ENCODE measurements at regions of chr16 and their contacts with region 1.

Region 1: DNA sequence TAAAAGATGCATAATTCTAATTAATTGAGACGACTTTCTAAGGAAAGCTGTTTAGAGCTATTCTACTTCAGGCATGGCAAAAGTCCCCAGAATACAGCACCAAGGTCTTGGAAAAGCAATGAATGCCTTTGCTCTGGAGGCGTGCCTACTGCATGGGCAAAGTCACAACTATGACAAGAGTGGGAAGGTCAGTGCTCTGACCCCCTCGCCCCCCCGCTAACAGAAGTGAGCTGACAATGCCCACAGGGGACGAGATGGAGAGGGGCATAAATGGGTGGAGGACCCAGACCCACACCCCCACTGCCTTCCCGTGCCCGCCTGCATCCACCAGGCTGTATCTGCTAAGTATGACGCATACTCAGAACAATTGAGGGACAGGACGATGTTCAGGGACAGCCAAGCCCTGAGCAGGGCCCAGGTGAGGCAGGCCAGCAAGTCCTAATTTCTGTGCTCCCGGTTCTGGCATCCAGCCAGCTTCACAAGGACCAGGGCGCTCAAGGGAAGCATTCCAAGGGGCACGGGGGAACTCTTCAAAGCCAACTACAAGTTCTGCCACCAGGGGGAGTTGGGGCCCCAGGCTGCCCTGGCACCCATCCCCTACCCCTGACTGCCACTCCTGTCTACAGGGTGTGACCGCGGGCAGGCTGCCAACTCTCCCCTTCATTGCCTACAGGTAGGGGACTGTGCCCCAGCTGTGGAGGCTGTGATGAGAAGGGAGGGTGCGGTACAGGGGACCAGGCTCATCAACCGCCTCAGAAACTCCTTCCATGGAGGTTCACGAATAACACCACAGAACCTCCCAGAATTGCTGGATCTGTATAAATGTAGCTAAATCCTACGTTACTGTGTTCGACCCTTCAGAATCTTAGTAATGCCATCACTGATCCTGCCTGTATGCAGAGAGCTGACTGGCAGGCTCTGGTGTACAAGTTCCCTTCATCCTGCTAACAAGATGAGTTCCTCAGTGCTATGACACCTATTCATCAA is 20.8 kb downstream of the NPRL3 start:
- DNase-seq: peak; percentile 58 to 94
- H3K4me3 ChIP-seq: no peak overlapping the region
- H3K27ac ChIP-seq: no peak overlapping the region
- H3K4me1 ChIP-seq: peaks cover 0 to 4% (median 1%) of the 10 kb centered on the region in 4 experiments; a peak in 4 of 7 replicates
- H3K27me3 ChIP-seq: no peaks in the 10 kb centered on the region
- CTCF ChIP-seq: peak; percentile 89 to 90 (median 89)
- EP300 ChIP-seq: no peak
- POLR2A ChIP-seq: no peak
- RAD21 ChIP-seq: peak; percentile 80 to 82

Region 2: GRCh38 chr16:65671-66137 is 52.0 kb before region 1 on chr16:
- CTCF ChIA-PET with region 1: interaction called, 18 read pairs
- POLR2A ChIA-PET with region 1: interaction called, 5 read pairs
- DNase-seq: peak in 1 of 2 experiments; percentile 98
- H3K4me3 ChIP-seq: no peak overlapping the region
- H3K27ac ChIP-seq: no peak overlapping the region
- H3K4me1 ChIP-seq: peaks cover 0 to 14% (median 4%) of the 10 kb centered on the region in 4 experiments; a peak in 6 of 7 replicates
- H3K27me3 ChIP-seq: no peaks in the 10 kb centered on the region
- CTCF ChIP-seq: peak; percentile 98 to 100 (median 99)
- EP300 ChIP-seq: no peak
- POLR2A ChIP-seq: no peak
- RAD21 ChIP-seq: peak; percentile 99 to 100

Region 3: GRCh38 chr16:96935-97381 is 20.7 kb before region 1 on chr16:
- CTCF ChIA-PET with region 1: interaction called, 43 read pairs
- POLR2A ChIA-PET with region 1: interaction called, 6 read pairs
- DNase-seq: peak; percentile 84 to 97
- H3K4me3 ChIP-seq: no peak overlapping the region
- H3K27ac ChIP-seq: no peak overlapping the region
- H3K4me1 ChIP-seq: no peaks in the 10 kb centered on the region
- H3K27me3 ChIP-seq: no peaks in the 10 kb centered on the region; a peak in 1 of 7 replicates
- CTCF ChIP-seq: peak; percentile 100
- EP300 ChIP-seq: no peak
- POLR2A ChIP-seq: no peak
- RAD21 ChIP-seq: peak; percentile 90 to 92

Region 4: GRCh38 chr16:149024-149662 is 31.5 kb after region 1 on chr16:
- CTCF ChIA-PET with region 1: interaction called, 18 read pairs
- POLR2A ChIA-PET with region 1: no interaction called
- DNase-seq: no peak
- H3K4me3 ChIP-seq: no peak overlapping the region
- H3K27ac ChIP-seq: no peak overlapping the region
- H3K4me1 ChIP-seq: no peaks in the 10 kb centered on the region
- H3K27me3 ChIP-seq: peaks cover 0 to 11% (median 7%) of the 10 kb centered on the region in 4 experiments; a peak in 6 of 7 replicates
- CTCF ChIP-seq: no peak
- EP300 ChIP-seq: no peak
- POLR2A ChIP-seq: no peak
- RAD21 ChIP-seq: no peak

Region 5: GRCh38 chr16:180938-181667 is 63.4 kb after region 1 on chr16:
- CTCF ChIA-PET with region 1: interaction called, 29 read pairs
- POLR2A ChIA-PET with region 1: interaction called, 3 read pairs
- DNase-seq: peak; percentile 54 to 99
- H3K4me3 ChIP-seq: peak overlapping the region; percentile 4 to 58 (median 20); a peak in 6 of 8 replicates
- H3K27ac ChIP-seq: no peak overlapping the region
- H3K4me1 ChIP-seq: peaks cover 0 to 5% (median 3%) of the 10 kb centered on the region in 4 experiments; a peak in 4 of 7 replicates
- H3K27me3 ChIP-seq: peaks cover 32 to 46% (median 41%) of the 10 kb centered on the region in 4 experiments
- CTCF ChIP-seq: peak; percentile 88 to 92 (median 91)
- EP300 ChIP-seq: 0 out of 3 replicates have a peak, but pooled peaks of 1 of the 2 experiments have one; percentile 6
- POLR2A ChIP-seq: peak in 1 of 2 experiments; percentile 22; a peak in 2 of 3 replicates
- RAD21 ChIP-seq: peak; percentile 81 to 82

Region 6: GRCh38 chr16:220021-220420 is 102.3 kb after region 1 on chr16:
- CTCF ChIA-PET with region 1: no interaction called
- POLR2A ChIA-PET with region 1: no interaction called
- DNase-seq: no peak
- H3K4me3 ChIP-seq: no peak overlapping the region
- H3K27ac ChIP-seq: no peak overlapping the region
- H3K4me1 ChIP-seq: no peaks in the 10 kb centered on the region
- H3K27me3 ChIP-seq: no peaks in the 10 kb centered on the region
- CTCF ChIP-seq: no peak
- EP300 ChIP-seq: no peak
- POLR2A ChIP-seq: no peak
- RAD21 ChIP-seq: no peak

Region 7: GRCh38 chr16:265711-266110 is 148.0 kb after region 1 on chr16:
- CTCF ChIA-PET with region 1: no interaction called
- POLR2A ChIA-PET with region 1: no interaction called
- DNase-seq: no peak
- H3K4me3 ChIP-seq: no peak overlapping the region
- H3K27ac ChIP-seq: no peak overlapping the region
- H3K4me1 ChIP-seq: no peaks in the 10 kb centered on the region; a peak in 1 of 7 replicates
- H3K27me3 ChIP-seq: no peaks in the 10 kb centered on the region
- CTCF ChIP-seq: no peak
- EP300 ChIP-seq: no peak
- POLR2A ChIP-seq: no peak
- RAD21 ChIP-seq: no peak

Region 8: DNA sequence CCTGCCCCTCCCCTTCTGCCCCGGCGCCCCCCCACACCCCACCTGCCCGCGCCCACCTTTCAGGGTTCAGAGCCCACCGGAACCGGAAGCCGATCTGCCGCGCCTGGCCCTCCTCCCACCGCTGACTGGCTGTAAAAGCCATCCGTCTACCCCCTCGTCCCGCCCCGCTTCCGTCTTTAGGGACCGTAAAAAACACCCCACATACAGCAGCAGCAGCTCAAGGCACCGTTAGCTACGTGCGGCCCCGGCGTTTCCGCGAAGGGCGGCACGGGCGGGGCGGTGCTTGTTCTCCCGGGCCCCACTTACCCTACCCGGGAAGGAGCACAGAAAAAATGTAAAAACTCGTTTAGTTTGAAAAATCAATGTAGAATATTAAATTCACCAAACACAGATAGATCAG is 252.8 kb after region 1 on chr16 and contains the start of gene MRPL28:
- CTCF ChIA-PET with region 1: no interaction called
- POLR2A ChIA-PET with region 1: no interaction called
- DNase-seq: peak; percentile 89 to 97
- H3K4me3 ChIP-seq: peak within 1 kb of the TSS; percentile 23 to 60 (median 49); a peak in 7 of 8 replicates
- H3K27ac ChIP-seq: no peak within 1 kb of the TSS
- H3K4me1 ChIP-seq: peaks cover 0 to 10% (median 9%) of the 10 kb centered on the region in 4 experiments; a peak in 5 of 7 replicates
- H3K27me3 ChIP-seq: no peaks in the 10 kb centered on the region
- CTCF ChIP-seq: no peak
- EP300 ChIP-seq: no peak
- POLR2A ChIP-seq: no peak
- RAD21 ChIP-seq: no peak
- total RNA-seq, gene MRPL28: 88.9 and 95.7 TPM in 2 replicates